Activated CD8-positive, alpha-beta memory T cell treated with anti-CD3 and anti-CD28 coated beads, Interleukin-2, amount 10 ng/mL, durations not matched to agents 7 days and 5 days (primary cell): ENCODE measurements at regions of chr3 and their contacts with region 1.

Region 1: DNA sequence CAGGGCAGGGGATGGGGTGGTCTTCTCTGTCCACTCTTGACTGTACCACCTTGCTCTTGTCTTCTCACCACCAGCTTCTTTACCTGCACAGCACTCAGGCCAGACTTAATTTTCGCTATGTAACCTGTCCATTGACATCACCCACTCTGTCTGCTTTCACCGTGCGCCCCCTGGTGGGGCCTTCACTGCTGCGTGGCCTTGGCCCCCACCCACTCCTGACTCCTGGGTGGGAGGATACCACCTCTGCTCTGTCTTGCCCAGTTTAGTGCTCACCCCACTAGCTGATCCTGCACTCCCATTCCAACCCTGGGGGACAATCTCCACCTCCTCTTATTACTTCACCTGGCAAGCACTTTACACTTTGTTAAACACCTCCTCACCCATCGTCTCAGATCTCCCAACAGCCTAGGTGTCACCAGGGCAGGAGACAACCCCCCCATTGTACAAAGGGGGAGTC is 17.7 kb downstream of the PTH1R start:
- DNase-seq: peak; percentile 80
- ATAC-seq: peak; percentile 86
- H3K4me3 Mint-ChIP-seq: no peak overlapping the region
- H3K27ac Mint-ChIP-seq: no peak overlapping the region
- H3K4me1 Mint-ChIP-seq: peaks cover 12% of the 10 kb centered on the region
- H3K27me3 Mint-ChIP-seq: peaks cover 55% of the 10 kb centered on the region

Region 2: GRCh38 chr3:46705022-46705530 is 190.2 kb before region 1 on chr3:
- CTCF ChIA-PET with region 1: interaction called, 23 read pairs
- DNase-seq: peak; percentile 76
- ATAC-seq: peak; percentile 82
- H3K4me3 Mint-ChIP-seq: no peak overlapping the region
- H3K27ac Mint-ChIP-seq: no peak overlapping the region
- H3K4me1 Mint-ChIP-seq: no peaks in the 10 kb centered on the region
- H3K27me3 Mint-ChIP-seq: peaks cover 21% of the 10 kb centered on the region

Region 3: GRCh38 chr3:46853441-46854415 is 41.5 kb before region 1 on chr3:
- CTCF ChIA-PET with region 1: no interaction called
- DNase-seq: no peak
- ATAC-seq: no peak
- H3K4me3 Mint-ChIP-seq: no peak overlapping the region
- H3K27ac Mint-ChIP-seq: no peak overlapping the region
- H3K4me1 Mint-ChIP-seq: no peaks in the 10 kb centered on the region
- H3K27me3 Mint-ChIP-seq: no peaks in the 10 kb centered on the region

Region 4: GRCh38 chr3:46866720-46867549 is 28.3 kb before region 1 on chr3:
- CTCF ChIA-PET with region 1: interaction called, 10 read pairs
- DNase-seq: peak; percentile 81
- ATAC-seq: peak; percentile 72
- H3K4me3 Mint-ChIP-seq: no peak overlapping the region
- H3K27ac Mint-ChIP-seq: no peak overlapping the region
- H3K4me1 Mint-ChIP-seq: no peaks in the 10 kb centered on the region
- H3K27me3 Mint-ChIP-seq: peaks cover 7% of the 10 kb centered on the region

Region 5: GRCh38 chr3:46884929-46885328 is 10.3 kb before region 1 on chr3:
- CTCF ChIA-PET with region 1: interaction called, 17 read pairs
- DNase-seq: no peak
- ATAC-seq: no peak
- H3K4me3 Mint-ChIP-seq: no peak overlapping the region
- H3K27ac Mint-ChIP-seq: no peak overlapping the region
- H3K4me1 Mint-ChIP-seq: no peaks in the 10 kb centered on the region
- H3K27me3 Mint-ChIP-seq: peaks cover 66% of the 10 kb centered on the region

Region 6: DNA sequence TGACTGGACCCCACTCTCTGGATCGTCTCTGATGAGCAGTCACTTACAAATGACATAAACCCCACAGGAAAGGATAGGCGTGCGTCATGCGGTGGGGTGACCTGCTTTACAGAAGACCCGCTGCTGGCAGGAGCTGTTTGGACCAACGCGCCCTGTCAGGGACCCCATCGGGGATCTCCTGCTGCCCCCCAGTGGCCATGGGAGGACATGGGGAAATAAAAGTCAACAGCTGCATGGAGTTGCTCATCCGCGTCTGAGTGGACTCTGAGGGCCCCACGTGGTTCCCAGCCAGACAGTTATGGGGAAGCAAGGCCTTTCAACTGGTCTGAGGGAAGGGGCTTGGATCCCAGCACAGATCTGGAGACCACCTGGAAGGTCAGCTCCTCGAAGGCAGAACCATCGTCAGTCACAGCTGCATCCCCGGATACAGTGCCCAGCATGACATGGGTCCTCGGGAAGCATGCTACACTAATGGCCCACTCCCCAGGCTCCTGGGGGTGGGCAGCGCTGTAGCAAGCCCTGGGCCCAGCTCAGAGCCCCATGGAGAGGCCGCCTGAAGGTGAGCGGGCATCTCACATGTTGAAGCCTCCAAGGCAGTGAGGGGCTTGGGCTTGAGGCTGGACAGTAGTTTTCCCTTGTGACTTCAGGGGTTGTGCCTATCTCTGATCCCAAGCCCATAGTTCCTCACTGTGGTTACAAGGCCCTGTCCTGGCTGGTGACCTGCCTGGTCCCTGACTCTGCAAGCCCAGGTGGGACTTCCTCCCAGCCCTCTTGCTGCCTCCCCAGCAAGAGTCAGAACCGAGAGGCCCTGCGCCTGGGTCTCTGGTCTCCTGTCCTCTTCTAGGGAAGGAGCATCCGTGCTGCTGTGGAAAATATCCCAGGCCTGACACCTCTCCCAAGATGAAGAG is 14.6 kb after region 1 on chr3:
- CTCF ChIA-PET with region 1: interaction called, 18 read pairs
- DNase-seq: peak; percentile 89
- ATAC-seq: peak; percentile 84
- H3K4me3 Mint-ChIP-seq: no peak overlapping the region
- H3K27ac Mint-ChIP-seq: no peak overlapping the region
- H3K4me1 Mint-ChIP-seq: peaks cover 24% of the 10 kb centered on the region
- H3K27me3 Mint-ChIP-seq: no peaks in the 10 kb centered on the region

Region 7: DNA sequence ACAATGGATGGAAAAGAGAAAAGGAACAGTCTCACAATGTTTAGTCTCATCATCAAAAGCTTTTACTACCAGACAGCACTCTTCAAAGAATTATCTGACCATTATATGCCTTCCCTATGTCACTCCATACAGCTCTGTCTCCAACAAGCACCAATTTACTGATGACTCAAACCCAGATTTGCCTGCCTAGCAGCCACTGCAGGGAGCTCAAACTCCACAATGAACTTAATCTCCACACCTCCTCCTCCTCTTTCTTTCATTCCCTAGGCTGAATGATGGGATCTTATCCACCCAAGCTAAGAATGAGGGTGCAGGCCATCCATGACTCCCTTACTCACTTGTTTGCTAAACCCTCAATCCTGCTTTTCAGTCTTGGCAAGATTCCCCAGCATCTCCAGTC is 129.7 kb after region 1 on chr3:
- CTCF ChIA-PET with region 1: no interaction called
- DNase-seq: no peak
- ATAC-seq: peak; percentile 53
- H3K4me3 Mint-ChIP-seq: no peak overlapping the region
- H3K27ac Mint-ChIP-seq: no peak overlapping the region
- H3K4me1 Mint-ChIP-seq: peaks cover 30% of the 10 kb centered on the region
- H3K27me3 Mint-ChIP-seq: no peaks in the 10 kb centered on the region